Calu3 (cell line): ENCODE measurements at regions of chr3 and their contacts with region 1.

Region 1: DNA sequence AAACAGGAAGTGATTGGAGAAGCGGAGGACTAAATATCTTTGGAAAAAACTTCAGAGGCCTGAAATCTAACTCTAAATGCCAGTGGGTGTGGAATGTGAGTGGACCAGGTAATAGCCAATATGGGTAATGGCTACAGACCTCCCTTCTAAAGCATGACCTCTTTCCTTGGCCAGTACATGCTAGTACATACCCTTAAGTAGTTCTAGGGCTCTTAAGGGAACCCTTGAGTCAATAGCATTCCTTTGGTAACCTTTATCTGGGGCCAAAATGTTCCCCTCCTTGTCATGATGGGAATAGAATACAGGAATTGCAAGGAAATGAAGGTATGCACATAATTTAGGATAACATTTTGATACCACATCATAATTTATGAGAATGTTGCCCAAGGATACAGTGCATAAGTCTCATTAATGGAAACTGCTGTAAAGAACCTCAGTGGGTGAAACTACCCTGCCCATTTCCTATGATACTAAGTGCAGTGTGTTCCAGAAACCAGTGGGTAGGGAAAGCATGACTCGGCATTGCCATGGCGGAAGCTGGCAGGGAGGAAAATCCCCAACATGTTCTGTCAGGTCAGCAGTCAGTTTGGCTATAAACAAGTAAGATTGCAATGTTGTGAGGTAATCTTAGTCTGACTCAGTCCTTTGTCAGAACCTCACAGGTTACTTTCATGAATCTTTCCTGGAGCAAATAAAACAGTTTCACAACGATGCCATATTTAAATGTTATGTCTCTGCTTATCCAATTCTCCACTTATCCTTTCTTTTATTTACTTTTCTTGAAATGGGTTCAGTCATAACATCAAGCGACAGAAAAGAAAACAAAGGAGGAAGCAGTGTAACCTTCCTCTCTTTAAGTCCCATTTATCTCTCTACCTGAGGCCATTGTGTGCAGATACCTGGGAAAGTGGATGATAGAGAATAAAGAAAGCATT is 23.5 kb upstream of the RAP2B start:
- DNase-seq: peak; percentile 92
- H3K4me3 Mint-ChIP-seq: peak overlapping the region; percentile 28
- H3K27ac Mint-ChIP-seq: peak overlapping the region; percentile 99
- H3K4me1 Mint-ChIP-seq: peaks cover 75% of the 10 kb centered on the region
- H3K27me3 Mint-ChIP-seq: no peaks in the 10 kb centered on the region
- CTCF ChIP-seq: no peak

Region 2: DNA sequence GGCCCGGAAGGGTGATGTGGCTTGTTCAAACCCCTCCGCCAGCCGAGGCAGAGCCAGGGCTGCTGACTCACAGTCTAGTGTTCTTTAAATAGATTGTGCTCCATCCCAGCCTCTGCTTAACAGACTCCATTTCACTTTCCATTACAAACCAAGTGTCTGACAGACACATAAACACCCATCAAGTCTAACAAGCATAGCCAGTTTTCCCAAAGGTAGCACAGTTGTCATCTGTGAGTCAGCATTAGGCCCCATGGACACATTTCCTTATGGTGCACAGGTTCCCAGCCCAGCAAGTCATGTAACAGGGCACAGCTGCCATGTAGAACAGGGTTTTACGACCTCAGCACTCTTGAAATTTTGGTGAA is 86.5 kb before region 1 on chr3:
- CTCF ChIA-PET with region 1: interaction called, 6 read pairs
- intact Hi-C with region 1: loop called (anchors 1 kb)
- DNase-seq: peak; percentile 86
- H3K4me3 Mint-ChIP-seq: peak overlapping the region; percentile 63
- H3K27ac Mint-ChIP-seq: peak overlapping the region; percentile 100
- H3K4me1 Mint-ChIP-seq: peaks cover 49% of the 10 kb centered on the region
- H3K27me3 Mint-ChIP-seq: no peaks in the 10 kb centered on the region
- CTCF ChIP-seq: no peak

Region 3: GRCh38 chr3:153096611-153097202 is 41.8 kb before region 1 on chr3:
- CTCF ChIA-PET with region 1: interaction called, 3 read pairs
- intact Hi-C with region 1: loop called (anchors 1 kb)
- DNase-seq: peak; percentile 77
- H3K4me3 Mint-ChIP-seq: peak overlapping the region; percentile 39
- H3K27ac Mint-ChIP-seq: peak overlapping the region; percentile 66
- H3K4me1 Mint-ChIP-seq: peaks cover 71% of the 10 kb centered on the region
- H3K27me3 Mint-ChIP-seq: no peaks in the 10 kb centered on the region
- CTCF ChIP-seq: no peak

Region 4: GRCh38 chr3:153127788-153128187 is 10.8 kb before region 1 on chr3:
- CTCF ChIA-PET with region 1: no interaction called
- intact Hi-C with region 1: no loop called
- DNase-seq: no peak
- H3K4me3 Mint-ChIP-seq: no peak overlapping the region
- H3K27ac Mint-ChIP-seq: no peak overlapping the region
- H3K4me1 Mint-ChIP-seq: peaks cover 29% of the 10 kb centered on the region
- H3K27me3 Mint-ChIP-seq: no peaks in the 10 kb centered on the region
- CTCF ChIP-seq: no peak

Region 5: GRCh38 chr3:153232910-153233271 is 94.3 kb after region 1 on chr3:
- CTCF ChIA-PET with region 1: no interaction called
- intact Hi-C with region 1: no loop called
- DNase-seq: no peak
- H3K4me3 Mint-ChIP-seq: no peak overlapping the region
- H3K27ac Mint-ChIP-seq: no peak overlapping the region
- H3K4me1 Mint-ChIP-seq: no peaks in the 10 kb centered on the region
- H3K27me3 Mint-ChIP-seq: peaks cover 15% of the 10 kb centered on the region
- CTCF ChIP-seq: no peak

Region 6: GRCh38 chr3:153688301-153689120 is 550.0 kb after region 1 on chr3:
- CTCF ChIA-PET with region 1: interaction called, 12 read pairs
- intact Hi-C with region 1: no loop called
- DNase-seq: no peak
- H3K4me3 Mint-ChIP-seq: no peak overlapping the region
- H3K27ac Mint-ChIP-seq: no peak overlapping the region
- H3K4me1 Mint-ChIP-seq: no peaks in the 10 kb centered on the region
- H3K27me3 Mint-ChIP-seq: no peaks in the 10 kb centered on the region
- CTCF ChIP-seq: no peak